Heart left ventricle (tissue), 16 donors: ENCODE measurements at regions of chrX and their contacts with region 1.

Region 1: DNA sequence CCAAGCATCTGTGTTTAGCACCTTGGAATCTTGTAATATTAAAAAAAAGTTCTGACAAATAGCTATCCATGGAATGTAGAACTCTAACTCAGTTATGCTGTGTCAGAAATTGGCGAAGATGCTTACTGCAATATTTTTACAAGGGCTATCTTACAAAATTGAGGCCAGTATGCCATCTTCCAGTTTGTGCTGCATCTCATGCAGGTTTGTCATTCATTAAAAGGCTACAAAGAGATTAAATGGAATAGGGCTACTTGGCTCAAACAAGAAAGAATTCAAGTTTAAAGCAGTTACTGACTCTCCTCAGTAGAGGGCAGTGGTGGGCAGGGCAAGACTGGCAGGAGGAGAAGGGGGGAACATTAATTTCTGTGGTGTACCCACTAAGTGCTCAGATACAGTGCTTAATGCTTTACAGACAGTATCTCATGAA is 66.5 kb downstream of the SHROOM4 start:
- DNase-seq: peak in 3 of 5 donors; percentile 7 to 33 (median 14)
- ATAC-seq: no peak
- H3K4me3 ChIP-seq: no peak overlapping the region
- H3K27ac ChIP-seq: no peak overlapping the region
- H3K4me1 ChIP-seq: no peaks in the 10 kb centered on the region
- H3K27me3 ChIP-seq: peaks cover 0 to 24% (median 0%) of the 10 kb centered on the region in 9 donors
- CTCF ChIP-seq: peak; percentile 44 to 71 (median 60)
- POLR2A ChIP-seq: no peak

Region 2: DNA sequence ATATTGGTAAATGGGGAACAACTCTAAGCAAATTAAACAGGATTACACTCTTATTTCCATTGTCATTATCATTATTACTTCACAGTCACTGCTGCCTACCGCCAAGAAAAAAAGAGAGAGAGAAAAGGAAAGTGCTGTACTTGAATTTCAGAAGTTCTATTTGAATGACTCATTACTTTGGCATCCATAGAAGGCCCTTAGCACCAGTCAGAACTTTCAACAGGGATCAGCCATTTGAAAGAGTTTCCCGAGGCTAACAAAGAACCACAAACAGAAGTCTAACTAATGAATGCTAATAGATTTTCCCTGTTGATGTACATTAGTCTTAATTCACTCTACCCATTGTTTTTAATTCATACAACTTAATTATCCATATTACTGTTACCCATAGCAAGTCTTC is 49.8 kb before region 1 on chrX:
- intact Hi-C with region 1: loop called in 3 of 10 experiments (anchors 5 to 10 kb)
- DNase-seq: no peak
- ATAC-seq: peak in 3 of 4 donors; percentile 36 to 72 (median 52)
- H3K4me3 ChIP-seq: no peak overlapping the region
- H3K27ac ChIP-seq: no peak overlapping the region
- H3K4me1 ChIP-seq: peaks cover 0 to 6% (median 0%) of the 10 kb centered on the region in 12 donors
- H3K27me3 ChIP-seq: peaks cover 0 to 24% (median 0%) of the 10 kb centered on the region in 9 donors
- CTCF ChIP-seq: no peak
- POLR2A ChIP-seq: no peak

Region 3: GRCh38 chrX:50920132-50920531 is 172.6 kb after region 1 on chrX:
- intact Hi-C with region 1: loop called in 1 of 10 experiments (anchors 5 kb)
- DNase-seq: no peak
- ATAC-seq: no peak
- H3K4me3 ChIP-seq: no peak overlapping the region
- H3K27ac ChIP-seq: no peak overlapping the region
- H3K4me1 ChIP-seq: no peaks in the 10 kb centered on the region
- H3K27me3 ChIP-seq: peaks cover 0 to 4% (median 0%) of the 10 kb centered on the region in 9 donors
- CTCF ChIP-seq: peak; percentile 10 to 48 (median 36)
- POLR2A ChIP-seq: no peak

Region 4: DNA sequence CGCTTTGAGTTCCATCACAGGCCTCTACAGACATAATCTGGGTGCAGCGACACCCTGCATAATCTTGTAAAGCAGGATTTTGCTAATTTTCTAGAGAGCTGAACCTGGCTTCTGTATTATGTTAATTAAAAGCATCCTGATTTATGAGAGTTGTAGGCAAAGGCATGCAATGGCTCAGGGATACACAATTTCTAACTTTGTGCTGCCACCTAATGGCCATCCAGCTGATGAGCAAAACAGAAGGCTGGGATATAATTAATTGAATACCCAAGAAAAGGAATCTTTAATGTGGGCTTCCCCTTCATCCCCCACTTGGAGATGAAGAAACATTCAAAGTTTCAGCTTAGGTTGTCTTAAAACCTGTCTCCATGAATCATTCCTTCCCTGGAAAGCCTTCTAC is 241.2 kb after region 1 on chrX:
- intact Hi-C with region 1: loop called in 7 of 10 experiments (anchors 2 to 10 kb)
- DNase-seq: peak in 1 of 5 donors; percentile 23
- ATAC-seq: peak in 2 of 4 donors; percentile 51 to 59
- H3K4me3 ChIP-seq: no peak overlapping the region
- H3K27ac ChIP-seq: no peak overlapping the region
- H3K4me1 ChIP-seq: no peaks in the 10 kb centered on the region
- H3K27me3 ChIP-seq: peaks cover 0 to 41% (median 0%) of the 10 kb centered on the region in 9 donors
- CTCF ChIP-seq: peak; percentile 27 to 64 (median 52)
- POLR2A ChIP-seq: no peak